ENCODE measurements at regions of chr17 and their contacts with region 1.

Region 1: DNA sequence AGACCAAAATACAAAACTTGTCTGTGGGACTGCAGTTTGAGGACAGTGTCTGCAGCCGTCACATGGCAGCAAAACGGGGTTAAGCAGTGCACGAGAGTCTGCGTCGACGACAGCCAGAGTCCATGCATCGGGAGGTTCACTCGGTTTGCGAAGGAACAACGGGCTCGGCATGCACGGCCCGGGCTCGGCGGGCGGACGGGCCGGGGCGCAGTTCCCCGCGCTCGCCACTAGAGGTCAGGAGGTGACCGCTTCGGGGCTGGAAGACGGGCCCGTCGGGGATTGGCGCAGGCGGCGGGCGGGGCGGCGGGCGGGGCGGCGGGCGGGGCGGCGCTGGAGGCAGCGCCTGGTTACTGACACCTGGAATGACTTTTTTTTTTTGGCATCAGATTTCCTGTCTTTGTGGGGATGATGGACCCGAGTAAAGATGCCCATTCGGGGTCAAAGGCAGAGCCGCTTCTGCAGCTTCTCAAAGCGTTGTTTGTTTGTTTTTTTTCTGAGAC is 6.5 kb downstream of the SCGB1C2 start:
- DNase-seq: peak; percentile 71 to 84 (median 75)
- H3K4me3 ChIP-seq: no peak overlapping the region
- H3K4me3 Mint-ChIP-seq: peak overlapping the region in 1 of 7 donors; percentile 44
- H3K27ac ChIP-seq: no peak overlapping the region
- H3K27ac Mint-ChIP-seq: peak overlapping the region in 1 of 8 donors; percentile 84
- H3K4me1 ChIP-seq: no peaks in the 10 kb centered on the region
- H3K4me1 Mint-ChIP-seq: peaks cover 4 to 5% (median 4%) of the 10 kb centered on the region in 3 donors
- H3K27me3 ChIP-seq: no peaks in the 10 kb centered on the region
- H3K27me3 Mint-ChIP-seq: no peaks in the 10 kb centered on the region

Region 2: DNA sequence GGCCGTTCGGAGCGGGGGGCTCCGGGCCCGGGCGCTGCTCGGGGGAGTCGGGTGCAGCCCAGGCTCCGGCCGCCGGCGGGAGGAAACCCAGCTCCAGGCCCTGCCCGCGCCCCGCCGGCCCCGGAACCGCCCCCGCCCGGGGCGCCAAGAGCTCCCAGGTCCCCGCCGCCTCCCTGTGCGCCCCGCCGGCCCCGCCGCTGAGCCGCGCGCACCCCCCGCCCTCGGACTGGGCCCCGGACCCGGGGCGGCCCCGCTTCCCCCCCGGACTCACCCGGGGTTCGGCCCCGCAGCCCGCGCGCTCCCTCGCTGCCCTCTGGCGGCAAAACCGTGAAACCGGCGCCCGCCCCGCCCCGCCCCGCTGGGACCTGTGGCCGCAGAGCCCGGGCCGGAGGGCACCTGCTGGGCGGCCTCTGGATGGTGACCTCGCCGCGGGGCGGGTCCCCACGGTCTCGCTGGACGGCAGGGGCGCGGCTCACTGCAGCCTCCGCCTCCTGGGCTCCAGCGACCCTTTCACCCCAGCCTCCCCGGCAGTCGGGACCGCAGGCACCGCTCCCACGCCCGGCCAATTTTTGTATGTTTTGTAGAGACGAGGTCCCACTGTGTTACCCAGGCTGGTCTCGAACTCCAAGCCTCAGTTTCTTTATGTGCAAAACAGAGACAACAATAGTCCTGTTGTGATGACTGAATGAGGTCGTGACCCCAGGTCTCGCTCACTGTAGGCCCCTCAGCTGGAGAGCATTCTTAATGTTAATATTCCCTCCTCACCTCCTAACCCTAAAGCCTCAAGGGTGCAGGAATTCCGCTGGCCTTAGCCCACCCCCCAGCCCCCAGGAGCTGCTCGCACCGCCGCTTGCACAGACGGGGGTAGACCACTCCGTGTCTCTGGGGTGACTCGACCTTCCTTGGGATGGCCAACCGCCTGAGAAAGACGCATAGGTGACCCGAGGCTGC is 242.4 kb after region 1 on chr17:
- CTCF ChIA-PET with region 1: interaction called, 14 read pairs
- POLR2A ChIA-PET with region 1: no interaction called
- DNase-seq: peak; percentile 40 to 77 (median 60)
- H3K4me3 ChIP-seq: no peak overlapping the region
- H3K4me3 Mint-ChIP-seq: peak overlapping the region; percentile 78 to 94 (median 88)
- H3K27ac ChIP-seq: no peak overlapping the region
- H3K27ac Mint-ChIP-seq: peak overlapping the region in 5 of 8 donors; percentile 46 to 91 (median 84)
- H3K4me1 ChIP-seq: peaks cover 6% of the 10 kb centered on the region
- H3K4me1 Mint-ChIP-seq: peaks cover 18 to 23% (median 19%) of the 10 kb centered on the region in 3 donors
- H3K27me3 ChIP-seq: no peaks in the 10 kb centered on the region
- H3K27me3 Mint-ChIP-seq: peaks cover 5 to 10% of the 10 kb centered on the region in 2 donors

Measured in CD8-positive, alpha-beta memory T cell (primary cell).